Esophagus muscularis mucosa (tissue), 4 donors: ENCODE measurements at regions of chr22 and their contacts with region 1.

Region 1: GRCh38 chr22:24951942-24952836 is at the start of gene KIAA1671:
- DNase-seq: no peak
- H3K4me3 ChIP-seq: peak within 1 kb of the TSS; percentile 70 to 86 (median 78)
- H3K27ac ChIP-seq: peak within 1 kb of the TSS; percentile 76 to 81 (median 79)
- H3K4me1 ChIP-seq: peaks cover 15 to 39% (median 24%) of the 10 kb centered on the region in 4 donors
- H3K27me3 ChIP-seq: peaks cover 0 to 5% (median 0%) of the 10 kb centered on the region in 4 donors
- CTCF ChIP-seq: peak in 2 of 3 experiments; percentile 94 to 98
- EP300 ChIP-seq: no peak
- POLR2A ChIP-seq: no peak
- total RNA-seq, gene KIAA1671: 14.2 to 34.2 (median 22.6) TPM

Region 2: GRCh38 chr22:24875862-24876506 is 76.2 kb before region 1 on chr22:
- intact Hi-C with region 1: no loop called
- DNase-seq: no peak
- H3K4me3 ChIP-seq: no peak overlapping the region
- H3K27ac ChIP-seq: no peak overlapping the region
- H3K4me1 ChIP-seq: no peaks in the 10 kb centered on the region
- H3K27me3 ChIP-seq: no peaks in the 10 kb centered on the region
- CTCF ChIP-seq: no peak
- EP300 ChIP-seq: no peak
- POLR2A ChIP-seq: no peak

Region 3: GRCh38 chr22:24887260-24887659 is 64.9 kb before region 1 on chr22:
- intact Hi-C with region 1: no loop called
- DNase-seq: no peak
- H3K4me3 ChIP-seq: no peak overlapping the region
- H3K27ac ChIP-seq: no peak overlapping the region
- H3K4me1 ChIP-seq: no peaks in the 10 kb centered on the region
- H3K27me3 ChIP-seq: no peaks in the 10 kb centered on the region
- CTCF ChIP-seq: no peak
- EP300 ChIP-seq: no peak
- POLR2A ChIP-seq: no peak

Region 4: DNA sequence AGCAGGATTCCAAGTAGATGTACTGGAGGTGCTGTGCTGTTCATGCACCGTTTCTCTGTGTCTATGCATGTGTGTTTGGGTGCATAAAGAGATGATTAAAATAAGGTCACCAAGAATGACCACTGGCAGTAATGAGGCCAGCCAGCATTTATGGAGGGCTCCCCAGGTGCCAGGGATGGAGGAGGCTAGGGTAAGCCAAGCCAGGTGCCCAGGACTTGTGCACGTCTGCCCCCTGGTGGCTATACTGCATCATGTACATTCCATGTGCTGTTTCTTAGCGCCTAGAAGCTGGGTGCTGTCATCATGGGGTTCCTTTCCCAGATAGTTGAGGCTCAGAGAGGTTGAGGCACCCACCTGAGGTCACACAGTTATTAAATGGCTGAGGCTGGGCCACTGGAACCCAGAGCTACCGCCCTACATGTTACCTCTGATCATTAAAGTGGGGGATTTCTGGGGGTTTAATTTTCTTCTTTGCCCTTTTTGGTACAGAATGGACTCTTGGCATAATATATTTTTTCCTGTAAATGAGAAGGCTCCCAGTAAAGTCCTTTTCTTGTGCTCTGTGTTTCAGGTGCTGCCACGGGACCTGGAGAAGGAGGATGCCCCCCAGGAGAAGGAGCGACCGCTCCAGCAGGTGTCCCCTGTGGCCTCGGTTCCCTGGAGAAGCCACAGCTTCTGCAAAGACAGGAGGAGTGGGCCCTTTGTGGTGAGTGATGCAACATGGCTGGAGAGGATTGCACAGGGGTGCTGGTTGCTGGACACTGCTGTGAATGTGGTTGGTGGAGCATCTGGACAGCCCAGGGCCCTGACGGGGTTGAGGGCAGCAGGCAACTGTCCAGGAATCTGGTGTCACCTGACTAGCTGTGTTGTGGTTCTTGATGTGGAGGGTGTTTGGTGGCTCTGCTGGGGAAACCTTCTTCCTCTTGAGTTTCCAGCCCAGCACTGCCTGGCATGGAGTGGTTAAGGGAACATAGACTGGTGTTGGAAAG is 96.8 kb after region 1 on chr22:
- intact Hi-C with region 1: loop called (anchors 1 kb)
- DNase-seq: no peak
- H3K4me3 ChIP-seq: no peak overlapping the region
- H3K27ac ChIP-seq: no peak overlapping the region
- H3K4me1 ChIP-seq: peaks cover 9 to 23% (median 15%) of the 10 kb centered on the region in 4 donors
- H3K27me3 ChIP-seq: no peaks in the 10 kb centered on the region
- CTCF ChIP-seq: peak; percentile 77 to 92 (median 89)
- EP300 ChIP-seq: no peak
- POLR2A ChIP-seq: no peak